SK-N-SH (cell line): ENCODE measurements at regions of chr7 and their contacts with region 1.

Region 1: DNA sequence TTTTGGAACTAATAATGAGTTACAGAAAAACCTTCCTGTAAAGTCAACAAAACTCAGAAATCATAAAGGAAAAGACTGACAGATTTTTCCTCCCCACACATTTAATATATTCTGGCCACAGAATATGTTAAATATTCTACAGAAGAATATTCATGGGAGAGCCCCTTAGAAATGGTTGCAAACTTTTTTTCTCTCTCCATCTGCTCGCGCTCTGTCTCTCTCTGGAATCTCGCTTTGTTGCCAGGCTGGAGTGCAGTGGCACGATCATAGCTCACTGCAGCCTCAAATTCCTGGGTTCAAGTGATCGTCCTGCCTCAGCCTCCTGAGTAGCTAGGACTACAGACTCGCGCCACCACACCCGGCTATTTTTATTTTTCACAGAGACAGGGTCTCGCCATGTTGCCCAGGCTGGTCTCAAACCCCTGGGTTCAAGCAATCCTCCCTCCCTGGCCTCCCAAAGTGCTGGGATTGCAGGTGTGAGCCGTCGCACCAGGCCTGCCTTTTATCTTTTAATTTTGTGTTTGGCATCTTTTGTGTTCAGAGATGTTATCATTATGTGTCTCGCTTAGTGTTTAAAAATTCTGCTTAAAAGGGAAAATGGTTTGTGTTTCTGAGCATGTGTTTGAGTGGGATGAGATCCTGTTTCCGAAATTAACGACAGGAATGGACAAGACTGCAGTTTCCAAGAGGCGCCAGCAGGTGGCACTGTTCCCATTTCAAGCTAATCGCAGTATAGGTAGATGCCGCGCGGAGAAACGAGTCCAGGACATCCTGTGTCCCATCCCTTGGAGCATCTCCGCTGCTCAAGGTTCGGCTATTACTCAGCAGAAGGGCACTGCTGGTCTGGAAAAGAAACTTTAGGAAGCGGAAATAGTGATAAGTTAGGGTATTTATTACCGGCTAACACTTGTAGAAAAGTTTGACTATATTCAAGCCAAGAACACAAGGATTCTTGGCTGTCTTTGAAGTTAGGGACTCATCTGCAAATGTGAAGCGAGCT is 23.1 kb upstream of the ST7 start:
- DNase-seq: peak; percentile 80
- H3K4me3 ChIP-seq: no peak overlapping the region
- H3K27ac ChIP-seq: no peak overlapping the region
- H3K4me1 ChIP-seq: no peaks in the 10 kb centered on the region
- H3K27me3 ChIP-seq: no peaks in the 10 kb centered on the region
- CTCF ChIP-seq: peak; percentile 100
- EP300 ChIP-seq: no peak
- RAD21 ChIP-seq: peak; percentile 96

Region 2: GRCh38 chr7:116809636-116810266 is 120.5 kb before region 1 on chr7:
- CTCF ChIA-PET with region 1: no interaction called
- POLR2A ChIA-PET with region 1: no interaction called
- DNase-seq: peak; percentile 47
- H3K4me3 ChIP-seq: no peak overlapping the region
- H3K27ac ChIP-seq: no peak overlapping the region
- H3K4me1 ChIP-seq: no peaks in the 10 kb centered on the region; a peak in 2 of 4 replicates
- H3K27me3 ChIP-seq: peaks cover 42% of the 10 kb centered on the region; the same call in 1 of the 2 replicates
- CTCF ChIP-seq: peak; percentile 91
- EP300 ChIP-seq: no peak
- RAD21 ChIP-seq: peak; percentile 94

Region 3: DNA sequence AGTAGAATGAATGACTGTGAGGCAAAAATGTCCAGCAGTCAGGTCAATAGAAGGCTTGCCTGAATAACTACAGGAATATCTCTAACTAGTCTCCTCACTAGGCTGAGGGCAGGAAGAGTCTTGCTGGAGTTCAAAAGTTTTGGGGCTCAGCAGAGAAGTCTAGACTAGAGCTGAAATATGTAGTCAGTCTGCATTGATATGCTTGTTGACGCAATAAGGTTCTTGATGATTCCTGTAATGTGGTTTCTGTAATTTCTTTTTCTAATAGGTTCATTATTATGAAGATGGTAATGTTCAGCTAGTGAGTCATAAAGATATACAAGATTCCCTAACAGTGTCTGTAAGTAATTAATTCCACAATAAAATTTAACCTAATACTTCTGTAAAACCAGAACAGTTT is 18.4 kb before region 1 on chr7:
- CTCF ChIA-PET with region 1: interaction called, 26 read pairs
- POLR2A ChIA-PET with region 1: no interaction called
- DNase-seq: no peak
- H3K4me3 ChIP-seq: no peak overlapping the region
- H3K27ac ChIP-seq: peak overlapping the region; percentile 24 to 29; a peak in 2 of 4 replicates
- H3K4me1 ChIP-seq: no peaks in the 10 kb centered on the region; a peak in 1 of 4 replicates
- H3K27me3 ChIP-seq: no peaks in the 10 kb centered on the region
- CTCF ChIP-seq: no peak
- EP300 ChIP-seq: no peak
- RAD21 ChIP-seq: no peak

Region 4: GRCh38 chr7:116918704-116919103 is 11.5 kb before region 1 on chr7:
- CTCF ChIA-PET with region 1: interaction called, 26 read pairs
- POLR2A ChIA-PET with region 1: no interaction called
- DNase-seq: no peak
- H3K4me3 ChIP-seq: no peak overlapping the region
- H3K27ac ChIP-seq: no peak overlapping the region
- H3K4me1 ChIP-seq: no peaks in the 10 kb centered on the region
- H3K27me3 ChIP-seq: no peaks in the 10 kb centered on the region
- CTCF ChIP-seq: no peak
- EP300 ChIP-seq: no peak
- RAD21 ChIP-seq: no peak

Region 5: DNA sequence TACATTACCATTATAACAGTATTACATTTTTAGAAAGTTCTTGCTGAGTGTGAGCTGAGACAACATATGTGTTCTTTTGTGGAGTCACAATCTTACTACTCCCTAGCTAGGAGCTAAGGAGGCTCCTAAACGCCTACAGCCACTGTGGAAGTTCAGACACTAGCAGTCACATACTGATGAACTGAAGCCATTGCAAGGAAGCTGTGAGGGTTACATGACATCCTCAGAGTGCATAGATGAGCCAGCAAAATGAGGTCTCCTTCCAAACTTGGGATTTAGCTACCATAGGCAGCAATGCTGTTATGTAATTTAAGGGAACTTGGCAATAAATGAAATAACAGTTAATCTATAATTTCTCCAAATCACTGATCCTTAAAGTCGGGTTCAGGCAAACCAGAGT is 12.3 kb after region 1 on chr7:
- CTCF ChIA-PET with region 1: interaction called, 44 read pairs
- POLR2A ChIA-PET with region 1: no interaction called
- DNase-seq: no peak
- H3K4me3 ChIP-seq: no peak overlapping the region
- H3K27ac ChIP-seq: no peak overlapping the region
- H3K4me1 ChIP-seq: no peaks in the 10 kb centered on the region
- H3K27me3 ChIP-seq: no peaks in the 10 kb centered on the region
- CTCF ChIP-seq: no peak
- EP300 ChIP-seq: no peak
- RAD21 ChIP-seq: no peak

Region 6: GRCh38 chr7:116953727-116954442 is 23.7 kb after region 1 on chr7:
- CTCF ChIA-PET with region 1: interaction called, 18 read pairs
- POLR2A ChIA-PET with region 1: no interaction called
- DNase-seq: peak; percentile 92
- H3K4me3 ChIP-seq: peak overlapping the region; percentile 85 to 91
- H3K27ac ChIP-seq: peak overlapping the region; percentile 97
- H3K4me1 ChIP-seq: peaks cover 19 to 23% of the 10 kb centered on the region in 2 experiments; a peak in 3 of 4 replicates
- H3K27me3 ChIP-seq: no peaks in the 10 kb centered on the region
- CTCF ChIP-seq: no peak; the same call in 1 of the 2 replicates
- EP300 ChIP-seq: peak in 1 of 2 experiments; percentile 28; a peak in 1 of 4 replicates
- RAD21 ChIP-seq: no peak

Region 7: DNA sequence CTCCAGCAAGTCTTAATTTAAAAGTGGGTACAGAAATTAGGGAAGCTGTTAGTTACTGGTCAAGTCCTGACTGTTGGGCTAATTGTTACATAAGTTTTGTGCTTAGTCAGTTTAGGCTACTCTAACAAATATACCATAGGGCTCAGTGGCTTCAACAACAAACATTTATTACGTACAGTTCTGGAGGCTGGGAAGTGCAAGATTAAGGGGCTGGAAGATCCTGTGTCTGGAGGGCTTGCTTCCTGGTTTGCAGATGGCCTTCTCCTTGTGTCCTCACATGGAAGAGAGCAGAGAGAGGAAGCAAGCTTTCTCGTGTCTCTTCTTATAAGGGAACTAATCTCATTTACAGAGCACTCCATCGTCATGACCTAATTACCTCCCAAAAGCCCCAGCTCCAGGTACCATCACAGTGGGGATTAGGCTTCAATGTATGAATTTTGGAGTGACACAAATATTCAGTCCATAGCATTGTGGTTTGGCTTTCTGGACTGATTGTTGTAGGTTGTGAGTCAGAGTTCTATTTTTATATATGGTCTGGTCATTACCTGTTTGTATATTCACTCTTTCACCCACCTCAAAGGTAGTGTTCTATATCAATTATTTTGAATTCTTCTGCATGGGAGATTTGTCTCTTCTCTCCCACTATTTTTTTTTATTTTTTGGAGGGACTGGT is 40.2 kb after region 1 on chr7:
- CTCF ChIA-PET with region 1: interaction called, 11 read pairs
- POLR2A ChIA-PET with region 1: no interaction called
- DNase-seq: no peak
- H3K4me3 ChIP-seq: no peak overlapping the region
- H3K27ac ChIP-seq: no peak overlapping the region
- H3K4me1 ChIP-seq: peaks cover 0 to 6% of the 10 kb centered on the region in 2 experiments; a peak in 2 of 4 replicates
- H3K27me3 ChIP-seq: no peaks in the 10 kb centered on the region
- CTCF ChIP-seq: no peak
- EP300 ChIP-seq: no peak
- RAD21 ChIP-seq: no peak

Region 8: GRCh38 chr7:117385340-117386109 is 455.3 kb after region 1 on chr7:
- CTCF ChIA-PET with region 1: interaction called, 21 read pairs
- POLR2A ChIA-PET with region 1: no interaction called
- DNase-seq: peak; percentile 5
- H3K4me3 ChIP-seq: no peak overlapping the region
- H3K27ac ChIP-seq: no peak overlapping the region
- H3K4me1 ChIP-seq: no peaks in the 10 kb centered on the region; a peak in 1 of 4 replicates
- H3K27me3 ChIP-seq: peaks cover 7% of the 10 kb centered on the region; the same call in 1 of the 2 replicates
- CTCF ChIP-seq: peak; percentile 79
- EP300 ChIP-seq: no peak
- RAD21 ChIP-seq: peak; percentile 76